ENCODE measurements at regions of chr12 and their contacts with region 1.

Region 1: GRCh38 chr12:71636704-71637115 is 26.9 kb downstream of the ZFC3H1 start:
- DNase-seq: peak; percentile 86
- H3K4me3 ChIP-seq: no peak overlapping the region
- H3K27ac ChIP-seq: no peak overlapping the region
- H3K4me1 ChIP-seq: peaks cover 3% of the 10 kb centered on the region
- H3K27me3 ChIP-seq: no peaks in the 10 kb centered on the region
- CTCF ChIP-seq: peak; percentile 87

Region 2: DNA sequence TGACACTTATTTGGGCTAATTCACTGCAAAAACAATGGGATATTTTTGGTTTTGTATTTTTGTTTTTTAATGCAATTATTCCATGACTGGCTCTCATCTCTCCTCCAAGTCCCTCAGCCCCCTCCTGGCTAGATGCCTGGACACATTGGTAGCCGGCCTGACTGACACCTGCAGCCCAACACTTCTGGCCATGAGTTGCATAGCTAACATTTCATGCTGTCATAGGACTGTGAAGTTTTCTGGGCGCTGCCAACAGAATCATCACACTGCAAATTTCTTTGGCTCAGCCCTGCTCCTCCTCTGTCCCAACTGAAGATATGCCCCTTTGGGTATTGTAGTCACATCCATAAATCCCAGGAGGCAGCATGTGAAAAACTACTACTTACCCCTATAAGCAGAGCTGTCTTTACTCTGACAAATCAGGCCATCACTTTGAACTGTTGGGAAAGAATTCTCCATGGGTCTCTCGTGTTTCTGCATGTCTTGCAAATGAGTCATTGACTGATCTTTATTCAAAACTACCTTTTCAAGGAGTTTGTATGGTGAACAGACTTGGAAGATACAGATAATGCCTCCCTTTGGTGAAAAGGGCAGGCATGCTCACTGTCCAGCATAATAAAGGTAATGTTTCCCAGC is 323.8 kb before region 1 on chr12:
- CTCF ChIA-PET with region 1: no interaction called
- POLR2A ChIA-PET with region 1: no interaction called
- intact Hi-C with region 1: no loop called
- DNase-seq: peak; percentile 51
- H3K4me3 ChIP-seq: no peak overlapping the region
- H3K27ac ChIP-seq: no peak overlapping the region
- H3K4me1 ChIP-seq: peaks cover 6% of the 10 kb centered on the region
- H3K27me3 ChIP-seq: no peaks in the 10 kb centered on the region
- CTCF ChIP-seq: no peak

Region 3: GRCh38 chr12:71415336-71416231 is 221.1 kb before region 1 on chr12:
- CTCF ChIA-PET with region 1: interaction called, 5 read pairs
- POLR2A ChIA-PET with region 1: no interaction called
- intact Hi-C with region 1: loop called (anchors 2 kb)
- DNase-seq: peak; percentile 76
- H3K4me3 ChIP-seq: no peak overlapping the region
- H3K27ac ChIP-seq: no peak overlapping the region
- H3K4me1 ChIP-seq: peaks cover 4% of the 10 kb centered on the region
- H3K27me3 ChIP-seq: no peaks in the 10 kb centered on the region
- CTCF ChIP-seq: peak; percentile 88

Region 4: GRCh38 chr12:71648537-71648936 is 11.8 kb after region 1 on chr12:
- CTCF ChIA-PET with region 1: interaction called, 3 read pairs
- POLR2A ChIA-PET with region 1: interaction called, 11 read pairs
- intact Hi-C with region 1: no loop called
- DNase-seq: no peak
- H3K4me3 ChIP-seq: no peak overlapping the region
- H3K27ac ChIP-seq: no peak overlapping the region
- H3K4me1 ChIP-seq: peaks cover 2% of the 10 kb centered on the region
- H3K27me3 ChIP-seq: no peaks in the 10 kb centered on the region
- CTCF ChIP-seq: no peak

Measured in A673 (cell line).